ENCODE measurements at regions of chr2 and their contacts with region 1.

Region 1: GRCh38 chr2:70789304-70790135 is 923 bp downstream of the FIGLA start:
- DNase-seq: peak; percentile 44 to 70 (median 67)
- ATAC-seq: peak; percentile 81
- H3K4me3 ChIP-seq: peak overlapping the region; percentile 43
- H3K4me3 Mint-ChIP-seq: peak overlapping the region; percentile 79 to 93 (median 86)
- H3K27ac ChIP-seq: no peak overlapping the region
- H3K27ac Mint-ChIP-seq: peak overlapping the region in 1 of 9 donors; percentile 69
- H3K4me1 ChIP-seq: no peaks in the 10 kb centered on the region
- H3K4me1 Mint-ChIP-seq: peaks cover 9 to 22% (median 12%) of the 10 kb centered on the region in 7 donors
- H3K27me3 ChIP-seq: peaks cover 0 to 5% of the 10 kb centered on the region in 2 donors
- H3K27me3 Mint-ChIP-seq: peaks cover 41 to 70% (median 47%) of the 10 kb centered on the region in 5 donors

Region 2: GRCh38 chr2:70647873-70648481 is 141.5 kb before region 1 on chr2:
- CTCF ChIA-PET with region 1: interaction called, 11 read pairs
- POLR2A ChIA-PET with region 1: no interaction called
- intact Hi-C with region 1: no loop called
- DNase-seq: peak; percentile 55 to 81 (median 75)
- ATAC-seq: peak; percentile 85
- H3K4me3 ChIP-seq: no peak overlapping the region
- H3K4me3 Mint-ChIP-seq: no peak overlapping the region
- H3K27ac ChIP-seq: no peak overlapping the region
- H3K27ac Mint-ChIP-seq: peak overlapping the region in 1 of 9 donors; percentile 13
- H3K4me1 ChIP-seq: no peaks in the 10 kb centered on the region
- H3K4me1 Mint-ChIP-seq: no peaks in the 10 kb centered on the region
- H3K27me3 ChIP-seq: no peaks in the 10 kb centered on the region
- H3K27me3 Mint-ChIP-seq: peaks cover 0 to 30% (median 4%) of the 10 kb centered on the region in 5 donors

Region 3: DNA sequence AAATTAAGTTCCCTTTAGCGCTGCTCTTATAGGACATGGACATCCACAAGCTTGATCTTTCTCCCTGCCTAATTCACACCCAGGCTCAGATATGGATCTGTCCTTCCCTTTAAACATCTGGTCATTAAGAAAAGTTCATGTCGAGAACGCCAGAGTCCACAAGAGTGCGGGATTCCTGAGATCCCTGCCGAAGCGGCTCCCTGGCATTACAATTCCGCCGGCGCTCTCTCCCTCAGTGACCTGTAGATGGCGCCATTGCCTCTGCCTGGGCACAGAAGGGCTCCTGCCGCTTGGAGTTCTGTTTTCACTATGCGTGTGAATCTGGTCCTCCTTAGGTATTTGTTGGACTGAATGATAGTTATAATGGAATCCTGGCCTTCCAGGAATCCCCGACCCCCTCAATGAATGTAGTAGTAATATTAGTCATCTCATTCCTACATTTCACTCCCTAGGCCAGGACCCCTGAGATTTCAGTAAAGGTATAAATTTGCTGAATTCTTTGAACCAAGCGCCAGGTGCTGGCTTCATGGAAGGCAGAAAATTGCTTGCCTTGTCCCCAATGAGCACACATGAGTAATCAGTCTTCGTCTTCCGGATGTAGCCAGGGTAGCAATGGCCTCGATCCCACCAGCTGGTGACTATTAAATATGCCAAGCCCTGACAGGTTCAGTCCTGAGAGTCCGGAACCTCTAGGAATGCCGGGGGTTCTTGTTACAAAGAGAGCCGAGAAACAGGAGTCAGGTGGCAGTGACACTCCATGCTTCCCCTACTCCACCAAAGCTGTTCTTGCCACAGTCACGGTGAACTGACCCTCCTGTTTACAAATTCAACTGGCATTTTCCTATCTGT is 72.5 kb after region 1 on chr2:
- CTCF ChIA-PET with region 1: no interaction called
- POLR2A ChIA-PET with region 1: no interaction called
- intact Hi-C with region 1: loop called (anchors 1 to 2 kb)
- DNase-seq: peak; percentile 45 to 80 (median 66)
- ATAC-seq: peak; percentile 94
- H3K4me3 ChIP-seq: no peak overlapping the region
- H3K4me3 Mint-ChIP-seq: peak overlapping the region in 3 of 10 donors; percentile 24 to 57 (median 49)
- H3K27ac ChIP-seq: no peak overlapping the region
- H3K27ac Mint-ChIP-seq: no peak overlapping the region
- H3K4me1 ChIP-seq: no peaks in the 10 kb centered on the region
- H3K4me1 Mint-ChIP-seq: peaks cover 0 to 6% (median 4%) of the 10 kb centered on the region in 7 donors
- H3K27me3 ChIP-seq: no peaks in the 10 kb centered on the region
- H3K27me3 Mint-ChIP-seq: peaks cover 22 to 54% (median 29%) of the 10 kb centered on the region in 5 donors

Region 4: DNA sequence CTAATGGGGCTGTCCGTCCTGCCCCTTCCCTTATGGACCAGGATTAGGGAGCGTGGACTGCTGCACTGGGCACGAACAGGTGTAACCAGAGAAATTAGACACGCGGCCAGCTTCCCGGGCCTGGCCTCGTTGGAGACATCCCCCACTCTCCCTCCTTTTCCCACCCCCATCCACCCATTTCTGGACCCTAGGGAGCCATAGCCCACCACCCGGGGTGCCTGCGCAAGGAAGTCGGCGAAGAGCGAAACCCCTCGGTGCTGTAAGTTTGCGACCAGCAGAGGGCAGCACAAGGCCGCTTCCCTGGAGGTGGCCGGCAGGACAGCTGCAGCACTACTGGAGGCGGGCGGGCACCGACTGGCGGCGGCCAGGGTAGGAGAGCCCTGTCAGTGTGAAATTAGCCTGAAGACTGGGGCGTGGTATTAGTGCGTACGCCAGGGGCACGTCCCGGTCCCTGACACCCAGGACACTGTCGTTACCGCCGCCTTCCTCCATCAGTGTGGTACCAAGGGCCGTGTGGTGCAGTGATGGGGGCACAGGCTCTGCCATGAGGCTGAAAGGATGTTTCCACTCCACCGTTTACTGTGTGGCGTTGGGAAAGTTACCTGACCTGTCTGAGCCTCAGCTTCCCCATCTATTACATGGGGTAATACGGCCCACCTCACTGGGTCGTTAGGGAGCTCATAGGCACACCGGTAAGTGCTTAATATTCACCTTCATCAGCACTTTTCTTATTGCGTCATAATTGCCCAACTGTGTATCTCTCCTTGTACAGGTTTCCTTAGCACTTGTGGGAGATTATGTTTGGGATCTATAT is 82.1 kb after region 1 on chr2:
- CTCF ChIA-PET with region 1: interaction called, 6 read pairs
- POLR2A ChIA-PET with region 1: no interaction called
- intact Hi-C with region 1: loop called in 1 of 2 experiments (anchors 1 kb)
- DNase-seq: peak; percentile 38 to 83 (median 69)
- ATAC-seq: peak; percentile 98
- H3K4me3 ChIP-seq: peak overlapping the region; percentile 23
- H3K4me3 Mint-ChIP-seq: peak overlapping the region in 8 of 10 donors; percentile 37 to 74 (median 52)
- H3K27ac ChIP-seq: no peak overlapping the region
- H3K27ac Mint-ChIP-seq: no peak overlapping the region
- H3K4me1 ChIP-seq: peaks cover 8 to 9% of the 10 kb centered on the region in 2 donors
- H3K4me1 Mint-ChIP-seq: peaks cover 0 to 7% (median 4%) of the 10 kb centered on the region in 7 donors
- H3K27me3 ChIP-seq: peaks cover 5 to 14% of the 10 kb centered on the region in 2 donors
- H3K27me3 Mint-ChIP-seq: peaks cover 31 to 46% (median 44%) of the 10 kb centered on the region in 5 donors

Region 5: GRCh38 chr2:70919672-70920366 is 130.3 kb after region 1 on chr2:
- CTCF ChIA-PET with region 1: interaction called, 6 read pairs
- POLR2A ChIA-PET with region 1: no interaction called
- intact Hi-C with region 1: loop called (anchors 1 kb)
- DNase-seq: peak; percentile 28 to 78 (median 61)
- ATAC-seq: peak; percentile 86
- H3K4me3 ChIP-seq: no peak overlapping the region
- H3K4me3 Mint-ChIP-seq: no peak overlapping the region
- H3K27ac ChIP-seq: no peak overlapping the region
- H3K27ac Mint-ChIP-seq: no peak overlapping the region
- H3K4me1 ChIP-seq: no peaks in the 10 kb centered on the region
- H3K4me1 Mint-ChIP-seq: no peaks in the 10 kb centered on the region
- H3K27me3 ChIP-seq: no peaks in the 10 kb centered on the region
- H3K27me3 Mint-ChIP-seq: peaks cover 25 to 43% (median 27%) of the 10 kb centered on the region in 5 donors

Region 6: DNA sequence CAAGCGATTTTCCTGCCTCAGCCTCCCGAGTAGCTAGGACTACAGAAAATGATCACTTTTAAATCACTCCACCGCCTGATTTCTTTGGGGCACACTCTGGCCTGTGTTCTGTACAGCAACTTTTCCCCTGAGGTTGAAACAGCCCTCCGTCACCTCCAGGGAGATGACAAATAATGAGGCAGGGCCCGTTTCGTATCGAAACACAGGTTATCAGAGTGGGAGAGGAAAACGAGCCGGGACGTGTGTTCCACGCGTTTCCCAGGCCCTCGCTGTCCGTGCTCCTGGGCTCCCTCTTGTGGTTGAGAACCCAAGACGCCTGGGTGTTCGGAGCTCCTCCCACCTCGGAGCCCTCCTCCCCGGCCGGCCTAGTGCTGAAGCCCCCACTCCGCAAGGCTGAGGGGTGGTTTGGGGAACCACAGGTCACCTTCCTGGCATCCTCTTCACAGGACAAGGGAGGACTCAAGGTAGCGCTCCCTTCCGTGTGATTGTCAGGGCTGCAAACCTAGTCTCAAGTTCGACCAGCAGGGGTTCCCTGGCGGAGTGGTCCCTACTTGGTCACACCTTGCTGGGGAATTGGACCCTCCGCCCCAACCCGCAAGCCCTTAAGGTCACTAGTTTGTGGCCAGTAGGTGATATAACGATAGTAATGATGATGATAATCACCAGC is 158.9 kb after region 1 on chr2:
- CTCF ChIA-PET with region 1: interaction called, 13 read pairs
- POLR2A ChIA-PET with region 1: no interaction called
- intact Hi-C with region 1: loop called (anchors 1 kb)
- DNase-seq: peak; percentile 52 to 78 (median 70)
- ATAC-seq: peak; percentile 96
- H3K4me3 ChIP-seq: no peak overlapping the region
- H3K4me3 Mint-ChIP-seq: peak overlapping the region; percentile 73 to 96 (median 84)
- H3K27ac ChIP-seq: no peak overlapping the region
- H3K27ac Mint-ChIP-seq: peak overlapping the region in 2 of 9 donors; percentile 53 to 71
- H3K4me1 ChIP-seq: peaks cover 0 to 4% of the 10 kb centered on the region in 2 donors
- H3K4me1 Mint-ChIP-seq: peaks cover 10 to 18% (median 14%) of the 10 kb centered on the region in 7 donors
- H3K27me3 ChIP-seq: no peaks in the 10 kb centered on the region
- H3K27me3 Mint-ChIP-seq: peaks cover under 1 to 29% (median 23%) of the 10 kb centered on the region in 5 donors